ENCODE measurements at regions of chr2 and their contacts with region 1.

Region 1: GRCh38 chr2:160381425-160381951 is 112.1 kb downstream of the RBMS1 start:
- DNase-seq: peak in 1 of 9 experiments; percentile 42
- ATAC-seq: peak; percentile 57
- H3K4me3 ChIP-seq: no peak overlapping the region
- H3K4me3 Mint-ChIP-seq: no peak overlapping the region
- H3K27ac ChIP-seq: no peak overlapping the region
- H3K27ac Mint-ChIP-seq: peak overlapping the region; percentile 81
- H3K4me1 ChIP-seq: peaks cover 53% of the 10 kb centered on the region
- H3K4me1 Mint-ChIP-seq: peaks cover 89% of the 10 kb centered on the region
- H3K27me3 ChIP-seq: no peaks in the 10 kb centered on the region
- H3K27me3 Mint-ChIP-seq: no peaks in the 10 kb centered on the region
- CTCF ChIP-seq: no peak

Region 2: GRCh38 chr2:160394153-160394552 is 12.7 kb after region 1 on chr2:
- CTCF ChIA-PET with region 1: interaction called, 3 read pairs
- POLR2A ChIA-PET with region 1: interaction called, 3 read pairs
- intact Hi-C with region 1: loop called in 1 of 2 experiments (anchors 2 kb)
- DNase-seq: peak in 2 of 9 experiments; percentile 69 to 80
- ATAC-seq: peak; percentile 92
- H3K4me3 ChIP-seq: peak overlapping the region in 1 of 2 experiments; percentile 21
- H3K4me3 Mint-ChIP-seq: peak overlapping the region; percentile 50
- H3K27ac ChIP-seq: peak overlapping the region in 1 of 2 experiments; percentile 49
- H3K27ac Mint-ChIP-seq: peak overlapping the region; percentile 86
- H3K4me1 ChIP-seq: peaks cover 88% of the 10 kb centered on the region
- H3K4me1 Mint-ChIP-seq: peaks cover 64% of the 10 kb centered on the region
- H3K27me3 ChIP-seq: no peaks in the 10 kb centered on the region
- H3K27me3 Mint-ChIP-seq: no peaks in the 10 kb centered on the region
- CTCF ChIP-seq: no peak